ENCODE measurements at regions of chr3 and their contacts with region 1.

Region 1: GRCh38 chr3:24686808-24687207 is 192.2 kb upstream of the THRB start:
- DNase-seq: no peak
- H3K4me3 Mint-ChIP-seq: no peak overlapping the region
- H3K27ac Mint-ChIP-seq: no peak overlapping the region
- H3K4me1 Mint-ChIP-seq: peaks cover 11% of the 10 kb centered on the region
- H3K27me3 Mint-ChIP-seq: peaks cover 34% of the 10 kb centered on the region

Region 2: GRCh38 chr3:24264748-24265158 is 422.1 kb before region 1 on chr3:
- intact Hi-C with region 1: loop called (anchors 2 kb)
- DNase-seq: no peak
- H3K4me3 Mint-ChIP-seq: no peak overlapping the region
- H3K27ac Mint-ChIP-seq: no peak overlapping the region
- H3K4me1 Mint-ChIP-seq: no peaks in the 10 kb centered on the region
- H3K27me3 Mint-ChIP-seq: peaks cover 8% of the 10 kb centered on the region

Region 3: GRCh38 chr3:24494618-24495325 is 192.0 kb before region 1 on chr3 and contains the start of gene THRB:
- intact Hi-C with region 1: no loop called
- DNase-seq: no peak
- H3K4me3 Mint-ChIP-seq: no peak within 1 kb of the TSS
- H3K27ac Mint-ChIP-seq: no peak within 1 kb of the TSS
- H3K4me1 Mint-ChIP-seq: no peaks in the 10 kb centered on the region
- H3K27me3 Mint-ChIP-seq: peaks cover 55% of the 10 kb centered on the region
- total RNA-seq, gene THRB: not detected in 2 replicates

Region 4: GRCh38 chr3:25171118-25171807 is 484.5 kb after region 1 on chr3:
- intact Hi-C with region 1: no loop called
- DNase-seq: no peak
- H3K4me3 Mint-ChIP-seq: no peak overlapping the region
- H3K27ac Mint-ChIP-seq: no peak overlapping the region
- H3K4me1 Mint-ChIP-seq: no peaks in the 10 kb centered on the region
- H3K27me3 Mint-ChIP-seq: no peaks in the 10 kb centered on the region

Measured in activated T-helper 1 cell treated with anti-CD3 and anti-CD28 coated beads, Interleukin-12 subunit alpha, Interleukin-12 subunit beta, Interleukin-2, Interleukin-4 antibody, amounts not matched to agents 30 ng/mL and 10 ng/mL and 1 ng/mL, durations not matched to agents 14 hours and 24 hours and 36 hours (primary cell).